Right lobe of liver (tissue), 6 donors: ENCODE measurements at regions of chr12 and their contacts with region 1.

Region 1: DNA sequence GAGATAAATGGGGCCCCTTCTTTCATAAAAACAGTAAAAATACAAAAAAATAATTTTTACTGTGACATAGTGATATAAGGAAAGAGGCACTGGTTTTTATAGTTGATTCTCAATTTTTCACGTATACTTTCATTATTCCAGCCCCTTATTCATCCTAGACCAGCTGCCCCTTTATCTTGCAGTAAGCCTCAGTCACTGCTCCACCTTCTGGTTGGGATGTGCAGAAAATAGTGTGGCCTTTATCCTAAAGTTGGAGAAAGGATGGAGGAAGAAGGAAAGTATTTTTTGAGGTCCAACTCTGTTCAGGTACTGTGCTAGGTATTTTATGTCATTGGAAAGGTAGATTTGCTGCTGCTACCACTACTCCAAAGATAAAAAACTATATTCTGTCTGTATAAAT is 172.7 kb downstream of the ANO6 start:
- DNase-seq: no peak
- ATAC-seq: peak; percentile 72 to 77 (median 73)
- H3K4me3 ChIP-seq: no peak overlapping the region
- H3K27ac ChIP-seq: no peak overlapping the region
- H3K4me1 ChIP-seq: no peaks in the 10 kb centered on the region
- H3K27me3 ChIP-seq: no peaks in the 10 kb centered on the region
- CTCF ChIP-seq: peak; percentile 55 to 71 (median 62)
- POLR2A ChIP-seq: no peak

Region 2: DNA sequence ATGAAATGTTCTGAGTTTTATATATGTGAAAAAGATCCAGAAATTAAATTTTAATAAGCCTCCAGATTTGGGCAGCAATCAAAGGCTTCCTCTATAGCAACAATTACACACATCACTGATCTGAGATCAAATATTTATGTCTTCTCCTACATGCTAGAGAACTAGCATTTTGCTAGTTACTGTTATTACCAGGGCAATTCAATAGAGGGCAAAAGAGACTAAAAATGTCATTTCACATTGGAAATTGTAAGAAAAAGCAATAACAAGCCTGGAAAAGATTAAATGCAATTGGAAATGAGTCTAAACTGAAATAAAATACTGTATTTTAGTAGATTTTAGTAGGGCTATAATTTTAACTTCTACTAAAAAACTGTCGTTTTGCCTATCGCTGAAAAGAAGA is 205.3 kb before region 1 on chr12:
- intact Hi-C with region 1: loop called in 1 of 2 experiments (anchors 10 kb)
- DNase-seq: no peak
- ATAC-seq: peak; percentile 49 to 63 (median 59)
- H3K4me3 ChIP-seq: no peak overlapping the region
- H3K27ac ChIP-seq: no peak overlapping the region
- H3K4me1 ChIP-seq: no peaks in the 10 kb centered on the region
- H3K27me3 ChIP-seq: no peaks in the 10 kb centered on the region
- CTCF ChIP-seq: peak; percentile 46 to 55 (median 54)
- POLR2A ChIP-seq: no peak

Region 3: GRCh38 chr12:45200491-45201043 is 188.0 kb before region 1 on chr12:
- intact Hi-C with region 1: no loop called
- DNase-seq: peak in 2 of 3 donors; percentile 55 to 56
- ATAC-seq: peak; percentile 64 to 79 (median 68)
- H3K4me3 ChIP-seq: peak overlapping the region in 1 of 3 donors; percentile 33
- H3K27ac ChIP-seq: peak overlapping the region in 2 of 3 donors; percentile 57 to 71
- H3K4me1 ChIP-seq: peaks cover 0 to 52% (median 18%) of the 10 kb centered on the region in 4 donors
- H3K27me3 ChIP-seq: no peaks in the 10 kb centered on the region
- CTCF ChIP-seq: no peak
- POLR2A ChIP-seq: no peak